IMR-90 (cell line): ENCODE measurements at regions of chr5 and their contacts with region 1.

Region 1: DNA sequence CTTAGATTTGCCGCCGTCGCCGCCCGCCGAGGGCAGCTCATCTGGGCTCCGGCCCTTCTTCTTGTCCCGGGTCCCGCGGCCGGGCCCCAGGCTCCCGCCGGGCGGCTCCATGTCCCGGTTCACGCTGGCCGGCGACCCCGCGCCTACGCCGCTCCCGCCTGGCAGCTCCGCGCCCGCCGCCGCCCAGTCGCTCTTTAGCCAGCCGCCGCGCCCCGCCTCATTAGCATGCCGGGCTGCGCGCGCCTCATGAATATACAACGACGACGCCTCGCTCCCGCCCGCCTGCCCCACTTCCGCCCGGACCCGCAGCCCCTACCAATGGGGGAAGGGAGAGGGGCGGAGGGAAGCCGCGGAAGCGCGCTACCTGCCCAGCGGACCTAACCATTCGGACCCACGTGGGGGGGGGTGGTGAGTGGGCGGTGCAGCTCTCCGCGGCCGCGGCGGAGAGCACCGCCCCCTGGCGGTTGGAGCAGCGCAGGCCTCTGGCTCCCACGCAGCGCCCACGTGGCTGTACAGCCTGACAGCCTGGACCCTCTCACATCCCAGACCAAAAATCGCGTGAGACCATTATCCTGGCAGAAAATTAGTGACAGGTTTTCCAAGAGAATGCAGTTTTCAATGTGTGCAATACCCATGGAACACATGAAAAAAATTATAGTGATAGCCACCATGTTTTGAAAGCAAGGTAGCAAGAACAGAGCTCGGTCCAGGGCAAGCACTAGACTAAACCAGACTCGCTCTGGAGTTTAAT is at the start of gene DIAPH1:
- DNase-seq: peak; percentile 94
- ATAC-seq: peak; percentile 94
- H3K4me3 ChIP-seq: peak within 1 kb of the TSS; percentile 55
- H3K27ac ChIP-seq: peak within 1 kb of the TSS; percentile 41
- H3K4me1 ChIP-seq: 0 out of 2 replicates have a peak, but pooled peaks cover 3% of the 10 kb centered on the region
- H3K27me3 ChIP-seq: no peaks in the 10 kb centered on the region
- CTCF ChIP-seq: peak; percentile 99
- POLR2A ChIP-seq: peak; percentile 70; the same call in 1 of the 2 replicates
- RAD21 ChIP-seq: peak; percentile 85
- total RNA-seq, gene DIAPH1: 12.0 and 15.8 TPM in 2 replicates

Region 2: GRCh38 chr5:140312067-140312790 is 1306.8 kb before region 1 on chr5:
- CTCF ChIA-PET with region 1: no interaction called
- POLR2A ChIA-PET with region 1: no interaction called
- dilution Hi-C with region 1: no loop called
- in situ Hi-C with region 1: no loop called
- intact Hi-C with region 1: no loop called
- DNase-seq: peak; percentile 99
- ATAC-seq: peak; percentile 80
- H3K4me3 ChIP-seq: no peak overlapping the region
- H3K27ac ChIP-seq: peak overlapping the region; percentile 73
- H3K4me1 ChIP-seq: peaks cover 10% of the 10 kb centered on the region
- H3K27me3 ChIP-seq: no peaks in the 10 kb centered on the region
- CTCF ChIP-seq: no peak
- POLR2A ChIP-seq: no peak
- RAD21 ChIP-seq: 0 out of 2 replicates have a peak, but pooled peaks have one; percentile 18

Region 3: GRCh38 chr5:141199359-141200235 is 419.4 kb before region 1 on chr5 and contains the start of gene PCDHB11:
- CTCF ChIA-PET with region 1: no interaction called
- POLR2A ChIA-PET with region 1: no interaction called
- dilution Hi-C with region 1: no loop called
- in situ Hi-C with region 1: no loop called
- intact Hi-C with region 1: no loop called
- DNase-seq: no peak
- ATAC-seq: no peak
- H3K4me3 ChIP-seq: peak within 1 kb of the TSS; percentile 25; the same call in 1 of the 2 replicates
- H3K27ac ChIP-seq: no peak within 1 kb of the TSS
- H3K4me1 ChIP-seq: no peaks in the 10 kb centered on the region
- H3K27me3 ChIP-seq: no peaks in the 10 kb centered on the region
- CTCF ChIP-seq: no peak
- POLR2A ChIP-seq: no peak
- RAD21 ChIP-seq: no peak
- total RNA-seq, gene PCDHB11: under 0.01 TPM in 2 replicates

Region 4: GRCh38 chr5:141605523-141606277 is 13.3 kb before region 1 on chr5:
- CTCF ChIA-PET with region 1: interaction called, 5 read pairs
- POLR2A ChIA-PET with region 1: no interaction called
- dilution Hi-C with region 1: no loop called
- in situ Hi-C with region 1: no loop called
- intact Hi-C with region 1: loop called (anchors 2 kb)
- DNase-seq: no peak
- ATAC-seq: no peak
- H3K4me3 ChIP-seq: no peak overlapping the region
- H3K27ac ChIP-seq: no peak overlapping the region
- H3K4me1 ChIP-seq: peaks cover 4% of the 10 kb centered on the region
- H3K27me3 ChIP-seq: no peaks in the 10 kb centered on the region
- CTCF ChIP-seq: no peak
- POLR2A ChIP-seq: no peak
- RAD21 ChIP-seq: no peak

Region 5: GRCh38 chr5:141636413-141637122 is 17.6 kb after region 1 on chr5 and contains the starts of genes HDAC3 and RELL2:
- CTCF ChIA-PET with region 1: interaction called, 17 read pairs
- POLR2A ChIA-PET with region 1: no interaction called
- dilution Hi-C with region 1: no loop called
- in situ Hi-C with region 1: no loop called
- intact Hi-C with region 1: no loop called
- DNase-seq: peak; percentile 83
- ATAC-seq: peak; percentile 96
- H3K4me3 ChIP-seq: peak within 1 kb of the TSS; percentile 97
- H3K27ac ChIP-seq: peak within 1 kb of the TSS; percentile 89
- H3K4me1 ChIP-seq: peaks cover 12% of the 10 kb centered on the region
- H3K27me3 ChIP-seq: no peaks in the 10 kb centered on the region
- CTCF ChIP-seq: no peak
- POLR2A ChIP-seq: peak; percentile 80
- RAD21 ChIP-seq: no peak
- total RNA-seq, gene HDAC3: 71.7 and 84.2 TPM in 2 replicates
- total RNA-seq, gene RELL2: 2.2 TPM in 2 replicates